CD4-positive, alpha-beta T cell (primary cell): ENCODE measurements at regions of chr1 and their contacts with region 1.

Region 1: DNA sequence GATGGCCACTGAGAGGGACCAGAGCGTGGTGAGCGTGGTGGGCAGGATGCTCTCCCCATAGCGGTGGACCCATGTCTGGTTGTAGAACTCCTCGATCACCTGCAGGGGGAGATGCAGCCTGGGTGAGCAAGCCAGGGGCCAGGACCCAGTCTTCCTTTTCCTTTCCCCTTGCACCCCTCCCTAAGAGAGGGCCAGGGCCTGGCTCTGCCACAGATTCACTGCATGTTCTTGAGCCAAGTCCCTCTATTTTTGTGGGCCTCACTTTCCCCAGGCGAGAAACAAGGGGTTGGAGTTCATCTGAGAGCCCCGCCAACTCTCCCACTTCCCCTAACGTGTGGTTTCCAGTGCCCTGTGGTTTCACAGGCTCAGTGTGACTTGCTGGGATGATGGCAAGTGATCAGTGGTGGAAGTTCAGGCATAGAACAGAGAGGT is 27.5 kb downstream of the SLC2A1 start:
- DNase-seq: peak; percentile 30 to 83 (median 48)
- ATAC-seq: peak; percentile 52
- H3K4me3 ChIP-seq: peak overlapping the region; percentile 25
- H3K4me3 Mint-ChIP-seq: peak overlapping the region; percentile 53
- H3K27ac ChIP-seq: peak overlapping the region; percentile 82 to 83
- H3K27ac Mint-ChIP-seq: peak overlapping the region; percentile 91
- H3K4me1 ChIP-seq: peaks cover 64% of the 10 kb centered on the region
- H3K4me1 Mint-ChIP-seq: peaks cover 71% of the 10 kb centered on the region
- H3K27me3 ChIP-seq: no peaks in the 10 kb centered on the region
- H3K27me3 Mint-ChIP-seq: no peaks in the 10 kb centered on the region
- CTCF ChIP-seq: peak; percentile 70

Region 2: GRCh38 chr1:42456010-42456758 is 474.9 kb before region 1 on chr1 and contains the starts of genes PPCS and ZMYND12:
- CTCF ChIA-PET with region 1: no interaction called
- POLR2A ChIA-PET with region 1: no interaction called
- intact Hi-C with region 1: loop called in 1 of 2 experiments (anchors 10 kb)
- DNase-seq: peak; percentile 84 to 97 (median 89)
- ATAC-seq: peak; percentile 90
- H3K4me3 ChIP-seq: peak within 1 kb of the TSS; percentile 70
- H3K4me3 Mint-ChIP-seq: peak within 1 kb of the TSS; percentile 95
- H3K27ac ChIP-seq: peak within 1 kb of the TSS; percentile 98 to 99
- H3K27ac Mint-ChIP-seq: peak within 1 kb of the TSS; percentile 96
- H3K4me1 ChIP-seq: peaks cover 24% of the 10 kb centered on the region
- H3K4me1 Mint-ChIP-seq: peaks cover 56% of the 10 kb centered on the region
- H3K27me3 ChIP-seq: no peaks in the 10 kb centered on the region
- H3K27me3 Mint-ChIP-seq: no peaks in the 10 kb centered on the region
- CTCF ChIP-seq: peak; percentile 28
- total RNA-seq, gene PPCS: 39.7 to 40.4 TPM
- total RNA-seq, gene ZMYND12: 0.58 to 0.70 TPM

Region 3: GRCh38 chr1:42941640-42942330 is 10.7 kb after region 1 on chr1:
- CTCF ChIA-PET with region 1: interaction called, 4 read pairs
- POLR2A ChIA-PET with region 1: interaction called, 15 read pairs
- intact Hi-C with region 1: no loop called
- DNase-seq: peak in 3 of 14 experiments; percentile 39 to 57 (median 45)
- ATAC-seq: no peak
- H3K4me3 ChIP-seq: no peak overlapping the region
- H3K4me3 Mint-ChIP-seq: no peak overlapping the region
- H3K27ac ChIP-seq: peak overlapping the region in 1 of 2 donors; percentile 42
- H3K27ac Mint-ChIP-seq: peak overlapping the region; percentile 80
- H3K4me1 ChIP-seq: peaks cover 100% of the 10 kb centered on the region
- H3K4me1 Mint-ChIP-seq: peaks cover 93% of the 10 kb centered on the region
- H3K27me3 ChIP-seq: no peaks in the 10 kb centered on the region
- H3K27me3 Mint-ChIP-seq: no peaks in the 10 kb centered on the region
- CTCF ChIP-seq: no peak

Region 4: DNA sequence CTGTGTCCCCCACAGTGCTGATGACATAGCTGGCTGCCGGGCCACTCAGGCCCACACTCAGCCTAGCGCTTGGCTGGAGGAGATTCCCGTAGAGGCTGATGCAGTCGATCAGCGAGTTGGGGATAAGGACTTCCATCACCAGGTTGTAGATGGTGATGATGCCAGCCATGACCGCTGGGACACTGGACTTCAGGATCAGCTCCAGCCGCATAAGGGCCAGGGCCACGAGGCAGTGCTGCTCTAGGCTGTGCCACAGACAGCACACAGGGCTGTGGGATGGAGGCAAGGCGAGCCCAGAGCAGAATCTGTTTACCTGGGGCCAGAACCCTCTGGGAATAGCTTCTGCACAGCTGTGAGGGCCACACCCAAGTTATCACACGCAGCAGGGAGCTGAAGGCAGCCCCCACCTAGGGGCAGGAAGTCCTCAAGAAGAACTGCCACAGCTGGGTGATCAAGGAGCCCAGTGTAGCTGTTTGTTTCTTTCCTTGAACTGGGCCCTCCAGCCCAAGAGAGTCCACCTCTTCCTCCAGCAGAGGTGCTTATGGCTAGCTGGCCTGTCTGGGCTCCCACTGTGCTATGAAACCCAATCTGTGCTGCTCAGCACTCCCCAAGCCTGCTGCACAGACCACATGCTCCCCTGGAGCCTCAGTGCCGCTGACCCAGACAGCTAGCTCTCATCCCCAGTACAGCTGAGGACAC is 21.3 kb after region 1 on chr1:
- CTCF ChIA-PET with region 1: interaction called, 3 read pairs
- POLR2A ChIA-PET with region 1: interaction called, 34 read pairs
- intact Hi-C with region 1: loop called in 1 of 2 experiments (anchors 1 kb)
- DNase-seq: peak in 10 of 14 experiments; percentile 24 to 73 (median 48)
- ATAC-seq: peak; percentile 79
- H3K4me3 ChIP-seq: peak overlapping the region; percentile 3
- H3K4me3 Mint-ChIP-seq: peak overlapping the region; percentile 54
- H3K27ac ChIP-seq: peak overlapping the region; percentile 33 to 43
- H3K27ac Mint-ChIP-seq: peak overlapping the region; percentile 5
- H3K4me1 ChIP-seq: peaks cover 94% of the 10 kb centered on the region
- H3K4me1 Mint-ChIP-seq: peaks cover 93% of the 10 kb centered on the region
- H3K27me3 ChIP-seq: no peaks in the 10 kb centered on the region
- H3K27me3 Mint-ChIP-seq: no peaks in the 10 kb centered on the region
- CTCF ChIP-seq: no peak

Region 5: DNA sequence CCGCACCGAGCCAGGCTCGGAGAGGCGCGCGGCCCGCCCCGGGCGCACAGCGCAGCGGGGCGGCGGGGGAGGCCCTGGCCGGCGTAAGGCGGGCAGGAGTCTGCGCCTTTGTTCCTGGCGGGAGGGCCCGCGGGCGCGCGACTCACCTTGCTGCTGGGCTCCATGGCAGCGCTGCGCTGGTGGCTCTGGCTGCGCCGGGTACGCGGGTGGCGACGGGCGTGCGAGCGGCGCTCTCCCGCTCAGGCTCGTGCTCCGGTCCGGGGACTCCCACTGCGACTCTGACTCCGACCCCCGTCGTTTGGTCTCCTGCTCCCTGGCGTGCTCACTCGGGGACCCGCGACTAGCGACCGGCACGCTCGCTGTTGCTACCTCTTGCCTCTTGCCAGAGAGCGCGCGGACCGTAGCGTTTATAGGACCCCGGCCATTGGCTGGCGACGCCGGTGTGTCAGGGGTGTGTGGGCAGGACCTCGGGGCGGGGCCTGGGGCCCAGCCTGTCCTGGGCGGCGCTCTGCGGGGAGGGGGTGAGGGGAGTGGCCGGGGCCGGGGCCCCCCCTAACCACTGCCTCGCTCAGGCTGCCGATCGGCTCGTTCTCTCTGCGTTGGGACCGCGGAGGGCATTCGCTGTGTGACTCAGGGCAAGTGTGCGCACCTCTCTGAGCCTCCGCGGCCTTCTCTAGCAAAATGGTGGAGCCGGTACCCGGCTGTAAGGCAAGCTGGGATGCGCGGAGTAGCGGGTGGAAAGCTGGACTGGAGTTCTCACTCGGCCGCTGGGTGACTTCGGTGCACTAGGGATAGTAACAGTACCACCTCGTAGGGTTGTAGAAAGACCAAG is 27.6 kb after region 1 on chr1 and contains the start of gene SLC2A1:
- CTCF ChIA-PET with region 1: interaction called, 3 read pairs
- POLR2A ChIA-PET with region 1: interaction called, 34 read pairs
- intact Hi-C with region 1: loop called (anchors 1 kb)
- DNase-seq: peak; percentile 89 to 98 (median 94)
- ATAC-seq: peak; percentile 90
- H3K4me3 ChIP-seq: peak within 1 kb of the TSS; percentile 89
- H3K4me3 Mint-ChIP-seq: peak within 1 kb of the TSS; percentile 100
- H3K27ac ChIP-seq: peak within 1 kb of the TSS; percentile 73 to 76
- H3K27ac Mint-ChIP-seq: peak within 1 kb of the TSS; percentile 96
- H3K4me1 ChIP-seq: peaks cover 54% of the 10 kb centered on the region
- H3K4me1 Mint-ChIP-seq: peaks cover 60% of the 10 kb centered on the region
- H3K27me3 ChIP-seq: no peaks in the 10 kb centered on the region
- H3K27me3 Mint-ChIP-seq: no peaks in the 10 kb centered on the region
- CTCF ChIP-seq: no peak
- total RNA-seq, gene SLC2A1: 78.6 to 80.9 TPM